ENCODE measurements at regions of chr7 and their contacts with region 1.

Region 1: DNA sequence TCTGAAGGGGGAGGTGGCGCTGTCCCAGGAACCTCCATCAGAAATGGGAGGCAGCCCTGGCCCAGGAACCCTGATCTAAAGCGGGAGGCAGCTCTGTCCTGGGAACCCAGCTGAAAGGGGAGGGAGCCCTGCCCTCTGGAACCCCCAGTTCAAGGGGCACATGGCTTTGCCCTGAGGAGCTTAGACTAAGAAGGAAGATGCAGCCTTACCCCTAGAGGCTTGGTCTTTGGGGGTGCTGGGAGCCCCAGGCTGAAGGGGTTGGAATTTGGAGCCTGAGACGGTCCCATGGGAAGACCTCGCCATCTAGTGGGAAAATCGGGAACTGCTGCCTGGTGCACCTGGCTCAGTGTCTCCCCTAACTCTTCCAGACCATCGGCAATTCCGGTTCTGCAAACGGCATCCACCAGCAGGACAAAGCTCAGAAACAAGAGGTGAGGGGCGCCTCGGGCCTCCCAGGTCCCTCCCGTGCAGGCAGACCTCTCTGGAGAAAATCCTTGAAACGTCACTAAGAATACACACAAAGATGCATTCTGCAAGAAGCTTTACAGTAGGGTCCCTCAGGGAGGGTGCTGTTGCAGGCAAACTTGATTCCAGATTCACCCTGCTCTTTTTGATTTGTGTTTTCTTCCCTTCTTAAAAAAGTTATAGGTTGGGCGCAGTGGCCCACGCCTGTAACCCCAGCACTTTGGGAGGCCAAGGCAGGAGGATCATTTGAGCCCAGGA is 52.4 kb upstream of the GTF2IRD1 start:
- DNase-seq: peak; percentile 72 to 84 (median 77)
- ATAC-seq: peak; percentile 67
- H3K4me3 ChIP-seq: no peak overlapping the region
- H3K27ac ChIP-seq: no peak overlapping the region
- H3K4me1 ChIP-seq: no peaks in the 10 kb centered on the region
- H3K27me3 ChIP-seq: no peaks in the 10 kb centered on the region
- CTCF ChIP-seq: peak; percentile 87 to 99 (median 90)
- POLR2A ChIP-seq: no peak

Region 2: GRCh38 chr7:74289018-74289658 is 112.2 kb before region 1 on chr7 and contains the start of gene CLIP2:
- intact Hi-C with region 1: loop called (anchors 10 kb)
- DNase-seq: peak; percentile 81 to 84 (median 82)
- ATAC-seq: peak; percentile 84
- H3K4me3 ChIP-seq: peak within 1 kb of the TSS; percentile 37 to 61
- H3K27ac ChIP-seq: peak within 1 kb of the TSS; percentile 55 to 88 (median 80)
- H3K4me1 ChIP-seq: peaks cover 58% of the 10 kb centered on the region
- H3K27me3 ChIP-seq: no peaks in the 10 kb centered on the region
- CTCF ChIP-seq: peak in 2 of 7 experiments; percentile 33 to 35
- POLR2A ChIP-seq: peak; percentile 21 to 64 (median 40)
- total RNA-seq, gene CLIP2: 31.6 to 120 TPM